Activated naive CD4-positive, alpha-beta T cell treated with anti-CD3 and anti-CD28 coated beads for 36 hours (primary cell): ENCODE measurements at regions of chrX and their contacts with region 1.

Region 1: GRCh38 chrX:79167462-79167861 is 23.0 kb downstream of the GPR174 start:
- DNase-seq: no peak
- H3K4me3 Mint-ChIP-seq: peak overlapping the region; percentile 63
- H3K27ac Mint-ChIP-seq: peak overlapping the region; percentile 92
- H3K4me1 Mint-ChIP-seq: peaks cover 74% of the 10 kb centered on the region
- H3K27me3 Mint-ChIP-seq: no peaks in the 10 kb centered on the region

Region 2: GRCh38 chrX:79153348-79153747 is 14.1 kb before region 1 on chrX:
- CTCF ChIA-PET with region 1: interaction called, 8 read pairs
- intact Hi-C with region 1: loop called (anchors 1 kb)
- DNase-seq: no peak
- H3K4me3 Mint-ChIP-seq: peak overlapping the region; percentile 72
- H3K27ac Mint-ChIP-seq: peak overlapping the region; percentile 96
- H3K4me1 Mint-ChIP-seq: peaks cover 53% of the 10 kb centered on the region
- H3K27me3 Mint-ChIP-seq: no peaks in the 10 kb centered on the region

Region 3: GRCh38 chrX:79259073-79259689 is 91.7 kb after region 1 on chrX:
- CTCF ChIA-PET with region 1: interaction called, 3 read pairs
- intact Hi-C with region 1: loop called (anchors 1 kb)
- DNase-seq: peak; percentile 68
- H3K4me3 Mint-ChIP-seq: peak overlapping the region; percentile 58
- H3K27ac Mint-ChIP-seq: peak overlapping the region; percentile 91
- H3K4me1 Mint-ChIP-seq: peaks cover 83% of the 10 kb centered on the region
- H3K27me3 Mint-ChIP-seq: no peaks in the 10 kb centered on the region